Esophagus muscularis mucosa (tissue), 4 donors: ENCODE measurements at regions of chr2 and their contacts with region 1.

Region 1: GRCh38 chr2:235493775-235494715 is at the start of gene AGAP1:
- DNase-seq: peak; percentile 94
- H3K4me3 ChIP-seq: peak within 1 kb of the TSS; percentile 75 to 87 (median 80)
- H3K27ac ChIP-seq: peak within 1 kb of the TSS; percentile 83 to 90 (median 87)
- H3K4me1 ChIP-seq: peaks cover 22 to 41% (median 35%) of the 10 kb centered on the region in 4 donors
- H3K27me3 ChIP-seq: no peaks in the 10 kb centered on the region
- CTCF ChIP-seq: no peak
- EP300 ChIP-seq: no peak
- POLR2A ChIP-seq: no peak
- total RNA-seq, gene AGAP1: 37.9 to 62.4 (median 47.2) TPM

Region 2: GRCh38 chr2:235669983-235670962 is 176.2 kb after region 1 on chr2:
- intact Hi-C with region 1: loop called (anchors 10 kb)
- DNase-seq: no peak
- H3K4me3 ChIP-seq: peak overlapping the region; percentile 67 to 83 (median 78)
- H3K27ac ChIP-seq: peak overlapping the region; percentile 81 to 86 (median 82)
- H3K4me1 ChIP-seq: peaks cover 22 to 74% (median 58%) of the 10 kb centered on the region in 4 donors
- H3K27me3 ChIP-seq: peaks cover 0 to 5% (median 0%) of the 10 kb centered on the region in 4 donors
- CTCF ChIP-seq: peak; percentile 73 to 88 (median 77)
- EP300 ChIP-seq: no peak
- POLR2A ChIP-seq: no peak

Region 3: DNA sequence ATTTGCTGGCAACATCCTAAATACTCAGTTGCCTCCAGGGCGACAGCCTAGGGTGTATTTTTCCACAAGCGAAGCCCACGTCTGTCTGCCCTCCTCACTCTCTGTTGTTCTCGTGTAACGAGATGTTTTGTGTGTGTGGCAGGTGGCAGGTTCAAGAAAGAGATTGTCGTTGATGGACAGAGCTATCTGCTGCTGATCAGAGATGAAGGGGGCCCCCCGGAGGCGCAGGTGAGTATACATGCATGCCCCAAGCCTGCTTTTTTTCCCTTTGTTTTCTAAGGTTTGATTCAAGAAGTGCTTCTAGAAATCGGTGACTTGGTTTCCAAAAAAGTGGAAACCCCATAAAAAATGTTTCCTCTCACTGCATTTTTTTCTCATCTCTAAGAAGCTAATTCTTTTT is 246.8 kb after region 1 on chr2:
- intact Hi-C with region 1: loop called (anchors 5 kb)
- DNase-seq: no peak
- H3K4me3 ChIP-seq: no peak overlapping the region
- H3K27ac ChIP-seq: no peak overlapping the region
- H3K4me1 ChIP-seq: peaks cover 0 to 13% (median 5%) of the 10 kb centered on the region in 4 donors
- H3K27me3 ChIP-seq: no peaks in the 10 kb centered on the region
- CTCF ChIP-seq: peak in 2 of 3 experiments; percentile 11 to 23
- EP300 ChIP-seq: no peak
- POLR2A ChIP-seq: no peak

Region 4: GRCh38 chr2:235754352-235755207 is 260.5 kb after region 1 on chr2:
- intact Hi-C with region 1: no loop called
- DNase-seq: no peak
- H3K4me3 ChIP-seq: no peak overlapping the region
- H3K27ac ChIP-seq: no peak overlapping the region
- H3K4me1 ChIP-seq: peaks cover 0 to 10% (median 7%) of the 10 kb centered on the region in 4 donors
- H3K27me3 ChIP-seq: no peaks in the 10 kb centered on the region
- CTCF ChIP-seq: no peak
- EP300 ChIP-seq: no peak
- POLR2A ChIP-seq: no peak